Activated naive CD4-positive, alpha-beta T cell treated with anti-CD3 and anti-CD28 coated beads for 36 hours (primary cell): ENCODE measurements at regions of chr5 and their contacts with region 1.

Region 1: GRCh38 chr5:157148734-157149615 is 6.3 kb upstream of the MED7 start:
- DNase-seq: peak; percentile 93
- H3K4me3 Mint-ChIP-seq: no peak overlapping the region
- H3K27ac Mint-ChIP-seq: peak overlapping the region; percentile 81
- H3K4me1 Mint-ChIP-seq: peaks cover 53% of the 10 kb centered on the region
- H3K27me3 Mint-ChIP-seq: no peaks in the 10 kb centered on the region

Region 2: GRCh38 chr5:157172403-157172802 is 23.4 kb after region 1 on chr5:
- CTCF ChIA-PET with region 1: interaction called, 12 read pairs
- intact Hi-C with region 1: loop called (anchors 1 kb)
- DNase-seq: peak; percentile 96
- H3K4me3 Mint-ChIP-seq: peak overlapping the region; percentile 64
- H3K27ac Mint-ChIP-seq: peak overlapping the region; percentile 100
- H3K4me1 Mint-ChIP-seq: peaks cover 86% of the 10 kb centered on the region
- H3K27me3 Mint-ChIP-seq: no peaks in the 10 kb centered on the region

Region 3: GRCh38 chr5:157189223-157189622 is 40.2 kb after region 1 on chr5:
- CTCF ChIA-PET with region 1: interaction called, 17 read pairs
- intact Hi-C with region 1: no loop called
- DNase-seq: peak; percentile 78
- H3K4me3 Mint-ChIP-seq: peak overlapping the region; percentile 77
- H3K27ac Mint-ChIP-seq: peak overlapping the region; percentile 100
- H3K4me1 Mint-ChIP-seq: peaks cover 78% of the 10 kb centered on the region
- H3K27me3 Mint-ChIP-seq: no peaks in the 10 kb centered on the region

Region 4: DNA sequence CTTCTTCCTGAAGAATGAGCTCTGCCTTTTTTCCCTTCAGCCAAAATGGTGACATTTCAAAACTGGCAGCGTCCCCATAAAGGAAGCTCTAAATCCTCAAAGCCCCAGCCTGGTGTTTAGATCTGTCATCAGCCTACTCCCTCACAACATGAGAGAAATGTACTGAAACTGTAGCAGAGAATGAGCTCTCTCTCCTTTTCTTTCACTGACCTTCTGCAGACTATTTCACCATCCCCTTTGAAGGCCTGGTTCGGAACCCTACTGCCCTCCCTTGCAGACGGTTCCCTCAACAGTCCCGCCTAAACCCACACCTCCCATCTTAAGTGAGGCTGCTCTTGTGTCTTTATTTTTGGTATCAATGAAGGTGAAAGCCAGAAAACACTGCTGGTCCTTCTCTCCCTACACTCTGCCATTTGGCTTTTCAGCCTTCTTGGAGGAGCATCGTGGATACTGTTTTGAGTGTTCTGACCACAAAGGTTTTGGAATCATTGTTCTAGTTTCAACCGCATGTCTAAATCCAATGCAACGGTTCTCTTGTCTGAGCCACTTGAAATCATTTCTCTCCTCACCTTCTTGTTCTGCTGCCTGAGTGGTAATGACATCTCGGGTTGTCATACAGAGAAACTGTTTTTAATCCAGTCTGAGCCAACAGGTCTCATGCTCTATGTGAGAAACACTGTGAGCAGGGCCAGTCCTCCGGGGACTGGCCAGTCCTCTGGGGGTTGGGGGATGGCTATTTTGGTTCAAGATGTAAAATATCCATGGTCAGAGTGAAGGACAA is 70.7 kb after region 1 on chr5:
- CTCF ChIA-PET with region 1: interaction called, 10 read pairs
- intact Hi-C with region 1: loop called (anchors 1 kb)
- DNase-seq: peak; percentile 65
- H3K4me3 Mint-ChIP-seq: peak overlapping the region; percentile 45
- H3K27ac Mint-ChIP-seq: peak overlapping the region; percentile 97
- H3K4me1 Mint-ChIP-seq: peaks cover 81% of the 10 kb centered on the region
- H3K27me3 Mint-ChIP-seq: no peaks in the 10 kb centered on the region

Region 5: GRCh38 chr5:157253547-157253946 is 104.6 kb after region 1 on chr5:
- CTCF ChIA-PET with region 1: interaction called, 14 read pairs
- intact Hi-C with region 1: loop called (anchors 1 kb)
- DNase-seq: no peak
- H3K4me3 Mint-ChIP-seq: no peak overlapping the region
- H3K27ac Mint-ChIP-seq: peak overlapping the region; percentile 97
- H3K4me1 Mint-ChIP-seq: peaks cover 91% of the 10 kb centered on the region
- H3K27me3 Mint-ChIP-seq: no peaks in the 10 kb centered on the region

Region 6: GRCh38 chr5:157312492-157312891 is 163.5 kb after region 1 on chr5:
- CTCF ChIA-PET with region 1: interaction called, 11 read pairs
- intact Hi-C with region 1: loop called (anchors 1 kb)
- DNase-seq: peak; percentile 82
- H3K4me3 Mint-ChIP-seq: no peak overlapping the region
- H3K27ac Mint-ChIP-seq: peak overlapping the region; percentile 90
- H3K4me1 Mint-ChIP-seq: peaks cover 41% of the 10 kb centered on the region
- H3K27me3 Mint-ChIP-seq: no peaks in the 10 kb centered on the region

Region 7: GRCh38 chr5:158565017-158565789 is 1416.2 kb after region 1 on chr5:
- CTCF ChIA-PET with region 1: no interaction called
- intact Hi-C with region 1: no loop called
- DNase-seq: no peak
- H3K4me3 Mint-ChIP-seq: no peak overlapping the region
- H3K27ac Mint-ChIP-seq: no peak overlapping the region
- H3K4me1 Mint-ChIP-seq: no peaks in the 10 kb centered on the region
- H3K27me3 Mint-ChIP-seq: no peaks in the 10 kb centered on the region